BJ (cell line): ENCODE measurements at regions of chr17 and their contacts with region 1.

Region 1: GRCh38 chr17:66715745-66716156 is 119.2 kb upstream of the CACNG5 start:
- DNase-seq: no peak
- H3K4me3 ChIP-seq: no peak overlapping the region
- H3K27me3 ChIP-seq: no peaks in the 10 kb centered on the region
- CTCF ChIP-seq: peak; percentile 63

Region 2: GRCh38 chr17:66431910-66432683 is 283.7 kb before region 1 on chr17:
- CTCF ChIA-PET with region 1: no interaction called
- POLR2A ChIA-PET with region 1: no interaction called
- DNase-seq: peak; percentile 56
- H3K4me3 ChIP-seq: 0 out of 2 replicates have a peak overlapping the region, but pooled peaks have one; percentile 14
- H3K27me3 ChIP-seq: no peaks in the 10 kb centered on the region
- CTCF ChIP-seq: no peak

Region 3: DNA sequence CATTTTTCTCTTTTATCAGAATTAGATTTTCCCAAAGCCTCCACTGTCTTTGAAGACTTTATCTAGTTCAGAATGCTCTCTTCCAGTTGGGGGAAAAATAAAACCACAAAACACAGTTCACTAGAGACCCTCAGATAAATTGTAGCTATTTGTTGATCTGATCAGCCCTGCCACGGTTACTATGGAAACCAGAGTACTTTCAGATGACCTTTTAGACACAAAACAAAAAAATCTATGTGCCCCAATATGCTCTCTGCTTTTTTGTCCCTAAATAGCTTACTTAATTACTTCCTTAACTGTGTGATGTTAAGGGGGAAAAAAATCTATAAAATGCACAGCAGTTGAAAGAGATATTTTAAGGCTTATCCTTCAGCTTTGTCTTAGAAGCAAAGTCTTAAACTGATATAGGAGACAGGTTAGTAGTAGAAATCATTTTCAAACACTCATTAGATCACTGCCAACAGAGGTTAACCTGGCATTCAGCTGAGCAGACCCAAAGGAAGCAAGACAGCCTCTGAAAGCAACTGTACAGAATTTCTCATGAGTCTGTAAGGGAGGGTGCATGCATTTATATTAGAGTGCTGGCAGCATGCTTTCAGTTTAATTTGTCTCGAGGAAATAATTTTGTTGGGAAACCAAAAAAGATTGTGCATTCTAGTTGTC is 10.8 kb before region 1 on chr17:
- CTCF ChIA-PET with region 1: interaction called, 10 read pairs
- POLR2A ChIA-PET with region 1: no interaction called
- DNase-seq: no peak
- H3K4me3 ChIP-seq: no peak overlapping the region
- H3K27me3 ChIP-seq: no peaks in the 10 kb centered on the region
- CTCF ChIP-seq: no peak

Region 4: GRCh38 chr17:66727639-66728570 is 12.2 kb after region 1 on chr17:
- CTCF ChIA-PET with region 1: interaction called, 17 read pairs
- POLR2A ChIA-PET with region 1: no interaction called
- DNase-seq: no peak
- H3K4me3 ChIP-seq: no peak overlapping the region
- H3K27me3 ChIP-seq: no peaks in the 10 kb centered on the region
- CTCF ChIP-seq: peak; percentile 68

Region 5: DNA sequence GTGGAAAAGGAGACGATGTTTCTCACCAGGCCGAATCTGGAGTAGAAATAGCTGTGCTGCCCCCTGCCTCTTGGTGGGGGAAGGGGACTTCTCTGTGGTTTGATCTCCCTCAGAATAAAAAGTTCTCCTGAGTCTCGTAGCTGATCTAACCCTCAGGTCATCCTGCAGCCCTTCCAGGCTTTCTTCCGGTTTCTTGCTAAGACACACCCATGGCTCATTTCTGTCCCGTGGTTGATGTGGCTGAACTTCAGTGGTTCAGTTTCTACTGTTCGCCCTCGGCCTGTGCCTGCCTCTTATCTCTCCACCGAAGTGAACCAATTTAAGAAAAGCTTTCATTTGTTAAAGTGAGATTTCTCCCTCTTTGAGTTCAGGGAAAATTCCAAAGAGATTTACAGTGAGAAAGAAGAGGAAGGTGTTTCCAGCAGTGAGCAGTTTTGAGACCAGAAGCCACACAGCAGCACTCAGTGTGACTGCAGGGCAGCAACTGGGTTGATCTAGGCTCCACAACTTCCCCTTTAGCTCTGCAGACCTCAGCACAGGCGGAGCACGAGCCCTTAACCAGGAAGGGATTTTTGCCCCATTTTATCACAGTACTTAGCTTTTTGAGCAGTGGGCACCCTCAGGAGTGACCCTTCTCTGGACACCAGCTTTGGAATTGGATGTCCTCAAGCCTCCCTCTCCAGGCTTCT is 84.2 kb after region 1 on chr17:
- CTCF ChIA-PET with region 1: no interaction called
- POLR2A ChIA-PET with region 1: no interaction called
- DNase-seq: no peak
- H3K4me3 ChIP-seq: no peak overlapping the region
- H3K27me3 ChIP-seq: no peaks in the 10 kb centered on the region
- CTCF ChIP-seq: no peak